Panc1 (cell line): ENCODE measurements at regions of chr1 and their contacts with region 1.

Region 1: DNA sequence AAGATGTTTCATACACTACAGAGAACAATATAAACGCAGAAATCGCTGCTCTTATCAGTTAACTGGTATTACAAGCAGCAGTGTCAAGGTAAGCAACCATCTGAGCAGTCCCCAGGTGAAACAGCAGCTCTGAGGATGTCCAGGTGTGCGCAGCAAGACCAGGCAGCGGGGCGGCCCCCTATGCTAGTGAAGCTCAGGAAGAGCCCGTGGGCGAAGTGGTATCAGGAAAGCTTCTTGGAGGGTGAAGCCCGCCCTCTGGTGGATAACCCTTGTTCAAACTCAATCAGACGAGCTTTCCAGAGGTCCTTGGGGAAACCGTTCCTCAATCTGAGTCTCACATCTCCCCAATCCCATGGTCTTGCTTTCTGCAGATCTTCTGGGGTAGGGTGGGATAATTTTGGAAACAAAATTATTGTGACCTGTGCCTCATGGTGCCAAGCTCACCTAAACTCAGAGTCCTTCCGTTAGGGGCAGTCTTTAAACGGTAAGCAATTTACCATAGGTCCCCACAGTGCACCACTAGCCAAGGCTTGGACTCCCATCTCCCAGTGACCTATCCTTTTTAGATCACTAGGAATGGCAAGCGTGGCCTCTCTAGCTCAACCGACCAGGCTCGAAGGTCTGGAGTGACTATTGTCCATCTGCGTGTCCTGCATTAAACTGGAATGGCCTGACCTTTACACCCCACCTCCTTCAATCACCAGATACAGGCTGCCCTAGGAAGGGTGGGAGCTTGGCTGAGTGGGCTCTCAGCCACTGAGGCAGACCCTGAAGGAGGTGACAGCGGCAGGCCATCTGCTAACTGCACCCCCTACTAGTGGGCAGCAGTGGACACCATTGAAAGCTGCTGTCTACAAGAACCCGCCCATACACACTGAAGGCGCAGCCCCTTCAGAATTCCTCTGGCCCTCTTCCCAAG is 13.6 kb upstream of the FAM110D start:
- DNase-seq: peak; percentile 69
- ATAC-seq: peak; percentile 98
- H3K4me3 ChIP-seq: peak overlapping the region in 1 of 2 experiments; percentile 15; a peak in 1 of 4 replicates
- H3K27ac ChIP-seq: no peak overlapping the region
- H3K4me1 ChIP-seq: 0 out of 2 replicates have a peak, but pooled peaks cover 4% of the 10 kb centered on the region
- H3K27me3 ChIP-seq: no peaks in the 10 kb centered on the region
- CTCF ChIP-seq: peak; percentile 87

Region 2: GRCh38 chr1:25117233-25117823 is 1028.0 kb before region 1 on chr1:
- CTCF ChIA-PET with region 1: no interaction called
- POLR2A ChIA-PET with region 1: no interaction called
- in situ Hi-C with region 1: no loop called
- intact Hi-C with region 1: no loop called
- DNase-seq: no peak
- ATAC-seq: peak; percentile 68; the same call in 1 of the 2 replicates
- H3K4me3 ChIP-seq: no peak overlapping the region
- H3K27ac ChIP-seq: no peak overlapping the region
- H3K4me1 ChIP-seq: no peaks in the 10 kb centered on the region
- H3K27me3 ChIP-seq: no peaks in the 10 kb centered on the region; the same call in 1 of the 2 replicates
- CTCF ChIP-seq: no peak; the same call in 1 of the 2 replicates

Region 3: GRCh38 chr1:26102526-26102925 is 42.8 kb before region 1 on chr1:
- CTCF ChIA-PET with region 1: interaction called, 8 read pairs
- POLR2A ChIA-PET with region 1: no interaction called
- in situ Hi-C with region 1: no loop called
- intact Hi-C with region 1: loop called (anchors 1 kb)
- DNase-seq: no peak
- ATAC-seq: no peak
- H3K4me3 ChIP-seq: no peak overlapping the region
- H3K27ac ChIP-seq: no peak overlapping the region
- H3K4me1 ChIP-seq: peaks cover 4% of the 10 kb centered on the region; the same call in 1 of the 2 replicates
- H3K27me3 ChIP-seq: no peaks in the 10 kb centered on the region
- CTCF ChIP-seq: no peak